SK-N-SH (cell line): ENCODE measurements at regions of chr5 and their contacts with region 1.

Region 1: GRCh38 chr5:151758430-151759241 is at the start of gene ATOX1:
- DNase-seq: peak; percentile 100
- H3K4me3 ChIP-seq: peak within 1 kb of the TSS; percentile 73 to 85
- H3K27ac ChIP-seq: peak within 1 kb of the TSS; percentile 59 to 72; a peak in 3 of 4 replicates
- H3K4me1 ChIP-seq: peaks cover 0 to 17% of the 10 kb centered on the region in 2 experiments; a peak in 1 of 4 replicates
- H3K27me3 ChIP-seq: no peaks in the 10 kb centered on the region
- CTCF ChIP-seq: no peak
- EP300 ChIP-seq: no peak
- RAD21 ChIP-seq: no peak
- polyA plus RNA-seq, gene ATOX1: 344 and 497 TPM in 2 replicates

Region 2: GRCh38 chr5:151107738-151108508 is 650.7 kb before region 1 on chr5:
- CTCF ChIA-PET with region 1: no interaction called
- POLR2A ChIA-PET with region 1: no interaction called
- DNase-seq: no peak
- H3K4me3 ChIP-seq: no peak overlapping the region
- H3K27ac ChIP-seq: no peak overlapping the region
- H3K4me1 ChIP-seq: peaks cover 0 to 3% of the 10 kb centered on the region in 2 experiments; a peak in 1 of 4 replicates
- H3K27me3 ChIP-seq: no peaks in the 10 kb centered on the region
- CTCF ChIP-seq: no peak
- EP300 ChIP-seq: no peak
- RAD21 ChIP-seq: no peak

Region 3: GRCh38 chr5:151771259-151772028 is 12.8 kb after region 1 on chr5 and contains the start of gene G3BP1:
- CTCF ChIA-PET with region 1: interaction called, 9 read pairs
- POLR2A ChIA-PET with region 1: interaction called, 10 read pairs
- DNase-seq: peak; percentile 96
- H3K4me3 ChIP-seq: peak within 1 kb of the TSS; percentile 77 to 92
- H3K27ac ChIP-seq: peak within 1 kb of the TSS; percentile 87 to 94
- H3K4me1 ChIP-seq: peaks cover 19 to 31% of the 10 kb centered on the region in 2 experiments; a peak in 3 of 4 replicates
- H3K27me3 ChIP-seq: no peaks in the 10 kb centered on the region
- CTCF ChIP-seq: peak; percentile 71
- EP300 ChIP-seq: no peak
- RAD21 ChIP-seq: peak; percentile 76
- polyA plus RNA-seq, gene G3BP1: 21.7 and 25.1 TPM in 2 replicates

Region 4: GRCh38 chr5:152723482-152723881 is 964.8 kb after region 1 on chr5:
- CTCF ChIA-PET with region 1: no interaction called
- POLR2A ChIA-PET with region 1: no interaction called
- DNase-seq: no peak
- H3K4me3 ChIP-seq: no peak overlapping the region
- H3K27ac ChIP-seq: no peak overlapping the region
- H3K4me1 ChIP-seq: no peaks in the 10 kb centered on the region
- H3K27me3 ChIP-seq: no peaks in the 10 kb centered on the region
- CTCF ChIP-seq: peak; percentile 19; the same call in 1 of the 2 replicates
- EP300 ChIP-seq: no peak
- RAD21 ChIP-seq: no peak